ENCODE measurements at regions of chr5 and their contacts with region 1.

Region 1: GRCh38 chr5:64612344-64612961 is 77.8 kb upstream of the SHISAL2B start:
- DNase-seq: peak; percentile 73
- H3K4me3 ChIP-seq: no peak overlapping the region
- H3K27ac ChIP-seq: no peak overlapping the region
- H3K4me1 ChIP-seq: no peaks in the 10 kb centered on the region
- H3K27me3 ChIP-seq: peaks cover 21% of the 10 kb centered on the region
- CTCF ChIP-seq: peak; percentile 79

Region 2: GRCh38 chr5:63401436-63402046 is 1210.9 kb before region 1 on chr5:
- CTCF ChIA-PET with region 1: no interaction called
- POLR2A ChIA-PET with region 1: no interaction called
- intact Hi-C with region 1: loop called (anchors 10 kb)
- DNase-seq: peak; percentile 68
- H3K4me3 ChIP-seq: no peak overlapping the region
- H3K27ac ChIP-seq: no peak overlapping the region
- H3K4me1 ChIP-seq: no peaks in the 10 kb centered on the region
- H3K27me3 ChIP-seq: peaks cover 19% of the 10 kb centered on the region
- CTCF ChIP-seq: peak; percentile 90

Region 3: GRCh38 chr5:64074533-64074932 is 537.9 kb before region 1 on chr5:
- CTCF ChIA-PET with region 1: interaction called, 3 read pairs
- POLR2A ChIA-PET with region 1: no interaction called
- intact Hi-C with region 1: loop called (anchors 2 kb)
- DNase-seq: peak; percentile 57
- H3K4me3 ChIP-seq: no peak overlapping the region
- H3K27ac ChIP-seq: no peak overlapping the region
- H3K4me1 ChIP-seq: no peaks in the 10 kb centered on the region
- H3K27me3 ChIP-seq: peaks cover 4% of the 10 kb centered on the region
- CTCF ChIP-seq: peak; percentile 65

Region 4: DNA sequence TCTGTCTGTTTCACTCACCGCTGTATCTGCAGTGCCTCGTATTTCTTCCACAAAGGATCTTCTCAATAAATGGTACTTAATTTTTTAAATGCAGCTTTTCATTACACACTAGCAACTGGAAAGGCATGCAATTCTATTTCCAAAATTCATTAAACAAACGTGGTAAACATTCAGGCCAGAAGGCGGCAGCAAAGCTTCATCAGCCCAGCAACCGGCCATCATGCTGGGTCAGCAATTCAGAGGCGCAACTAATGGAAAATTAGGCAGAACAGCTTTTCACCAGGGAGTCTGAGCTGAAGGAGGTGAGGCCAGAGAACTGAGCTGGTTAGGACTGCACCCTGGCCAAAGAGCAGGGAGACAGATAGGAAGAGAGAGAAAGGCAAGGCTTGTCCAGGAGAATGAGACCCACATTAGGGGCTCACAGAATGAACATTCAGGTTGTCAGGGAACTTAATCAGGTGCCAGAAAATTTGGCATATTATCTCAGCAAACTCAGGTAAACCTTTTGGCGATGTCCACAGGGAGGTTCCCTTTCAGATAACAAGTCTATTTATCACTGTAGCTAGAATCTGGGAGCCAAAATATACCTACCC is 464.5 kb before region 1 on chr5:
- CTCF ChIA-PET with region 1: no interaction called
- POLR2A ChIA-PET with region 1: no interaction called
- intact Hi-C with region 1: loop called (anchors 5 kb)
- DNase-seq: peak; percentile 73
- H3K4me3 ChIP-seq: no peak overlapping the region
- H3K27ac ChIP-seq: no peak overlapping the region
- H3K4me1 ChIP-seq: no peaks in the 10 kb centered on the region
- H3K27me3 ChIP-seq: no peaks in the 10 kb centered on the region
- CTCF ChIP-seq: peak; percentile 75

Region 5: GRCh38 chr5:64229163-64229774 is 383.2 kb before region 1 on chr5:
- CTCF ChIA-PET with region 1: interaction called, 4 read pairs
- POLR2A ChIA-PET with region 1: no interaction called
- intact Hi-C with region 1: loop called (anchors 1 kb)
- DNase-seq: peak; percentile 45
- H3K4me3 ChIP-seq: no peak overlapping the region
- H3K27ac ChIP-seq: no peak overlapping the region
- H3K4me1 ChIP-seq: no peaks in the 10 kb centered on the region
- H3K27me3 ChIP-seq: no peaks in the 10 kb centered on the region
- CTCF ChIP-seq: peak; percentile 69

Region 6: GRCh38 chr5:64347309-64347708 is 265.1 kb before region 1 on chr5:
- CTCF ChIA-PET with region 1: interaction called, 8 read pairs
- POLR2A ChIA-PET with region 1: no interaction called
- intact Hi-C with region 1: loop called (anchors 5 kb)
- DNase-seq: peak; percentile 3
- H3K4me3 ChIP-seq: no peak overlapping the region
- H3K27ac ChIP-seq: no peak overlapping the region
- H3K4me1 ChIP-seq: no peaks in the 10 kb centered on the region
- H3K27me3 ChIP-seq: no peaks in the 10 kb centered on the region
- CTCF ChIP-seq: no peak; the same call in 1 of the 2 replicates

Region 7: DNA sequence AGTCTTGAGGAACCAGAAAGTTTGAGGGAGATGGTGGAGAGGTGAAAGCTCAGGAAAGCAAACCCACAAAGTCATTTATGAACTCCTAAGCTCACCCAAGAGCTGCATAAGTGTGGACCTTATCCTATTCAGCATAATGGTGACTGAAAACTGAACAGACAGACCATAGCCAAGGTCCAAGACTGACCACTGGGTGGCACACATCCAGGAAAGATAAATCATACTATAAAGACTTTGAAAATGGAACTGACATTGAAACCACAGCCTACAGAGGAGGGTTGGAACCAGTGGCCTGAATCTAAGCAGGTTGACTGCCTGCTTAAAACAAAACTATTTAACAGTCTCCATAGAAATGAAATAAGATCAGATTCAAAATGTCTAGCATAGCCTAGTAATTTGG is 227.7 kb before region 1 on chr5:
- CTCF ChIA-PET with region 1: no interaction called
- POLR2A ChIA-PET with region 1: no interaction called
- intact Hi-C with region 1: no loop called
- DNase-seq: peak; percentile 6
- H3K4me3 ChIP-seq: no peak overlapping the region
- H3K27ac ChIP-seq: no peak overlapping the region
- H3K4me1 ChIP-seq: no peaks in the 10 kb centered on the region
- H3K27me3 ChIP-seq: peaks cover 7% of the 10 kb centered on the region
- CTCF ChIP-seq: 0 out of 2 replicates have a peak, but pooled peaks have one; percentile 13

Measured in A673 (cell line).